GM23248 (cell line): ENCODE measurements at regions of chrX and their contacts with region 1.

Region 1: DNA sequence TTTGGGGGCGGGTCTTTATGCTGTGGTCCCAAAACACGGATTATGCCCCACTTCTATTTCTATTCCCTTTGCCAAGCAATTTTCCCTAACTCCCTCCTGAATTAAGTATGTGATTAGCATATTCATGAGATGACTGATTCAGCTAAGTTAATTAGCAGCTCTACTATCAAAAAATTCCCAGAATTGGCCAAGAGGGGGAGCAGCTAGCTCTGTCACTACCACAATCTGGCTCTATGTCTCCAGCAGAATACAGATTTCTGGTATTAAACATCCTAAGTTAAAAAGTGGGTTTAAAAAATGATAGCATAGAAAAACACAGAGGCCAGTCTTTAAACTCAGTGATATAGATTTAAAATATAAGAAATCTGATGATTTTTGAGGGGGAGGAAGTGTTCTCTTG is 80.3 kb downstream of the GPC4 start:
- DNase-seq: peak; percentile 57
- H3K4me3 ChIP-seq: no peak overlapping the region
- H3K27ac ChIP-seq: no peak overlapping the region
- H3K4me1 ChIP-seq: no peaks in the 10 kb centered on the region
- H3K27me3 ChIP-seq: no peaks in the 10 kb centered on the region

Region 2: GRCh38 chrX:132809581-132809980 is 525.4 kb before region 1 on chrX:
- in situ Hi-C with region 1: no loop called
- DNase-seq: no peak
- H3K4me3 ChIP-seq: no peak overlapping the region
- H3K27ac ChIP-seq: no peak overlapping the region
- H3K4me1 ChIP-seq: no peaks in the 10 kb centered on the region
- H3K27me3 ChIP-seq: no peaks in the 10 kb centered on the region

Region 3: GRCh38 chrX:133670383-133670782 is 335.4 kb after region 1 on chrX:
- in situ Hi-C with region 1: loop called (anchors 25 kb)
- DNase-seq: peak; percentile 43
- H3K4me3 ChIP-seq: no peak overlapping the region
- H3K27ac ChIP-seq: no peak overlapping the region
- H3K4me1 ChIP-seq: no peaks in the 10 kb centered on the region
- H3K27me3 ChIP-seq: no peaks in the 10 kb centered on the region